Sigmoid colon (tissue), 7 donors: ENCODE measurements at regions of chr9 and their contacts with region 1.

Region 1: GRCh38 chr9:97982683-97983588 is at the start of gene ANP32B:
- DNase-seq: peak; percentile 96
- H3K4me3 ChIP-seq: peak within 1 kb of the TSS; percentile 76 to 97 (median 93)
- H3K27ac ChIP-seq: peak within 1 kb of the TSS; percentile 98 to 100 (median 98)
- H3K4me1 ChIP-seq: peaks cover 0 to 45% (median 34%) of the 10 kb centered on the region in 4 donors
- H3K27me3 ChIP-seq: no peaks in the 10 kb centered on the region
- CTCF ChIP-seq: peak; percentile 33 to 92 (median 44)
- EP300 ChIP-seq: no peak
- POLR2A ChIP-seq: no peak
- total RNA-seq, gene ANP32B: 31.4 to 66.7 (median 51.3) TPM

Region 2: GRCh38 chr9:97632985-97633858 is 349.7 kb before region 1 on chr9 and contains the starts of genes NCBP1 and TSTD2:
- intact Hi-C with region 1: loop called (anchors 2 kb)
- DNase-seq: peak; percentile 99
- H3K4me3 ChIP-seq: peak within 1 kb of the TSS; percentile 73 to 91 (median 79)
- H3K27ac ChIP-seq: peak within 1 kb of the TSS; percentile 85 to 98 (median 94)
- H3K4me1 ChIP-seq: peaks cover 0 to 66% (median 43%) of the 10 kb centered on the region in 4 donors
- H3K27me3 ChIP-seq: no peaks in the 10 kb centered on the region
- CTCF ChIP-seq: no peak
- EP300 ChIP-seq: peak in 1 of 4 donors; percentile 30
- POLR2A ChIP-seq: peak; percentile 79 to 80
- total RNA-seq, gene NCBP1: 13.9 to 20.2 (median 18.7) TPM
- total RNA-seq, gene TSTD2: 15.5 to 31.2 (median 24.9) TPM

Region 3: DNA sequence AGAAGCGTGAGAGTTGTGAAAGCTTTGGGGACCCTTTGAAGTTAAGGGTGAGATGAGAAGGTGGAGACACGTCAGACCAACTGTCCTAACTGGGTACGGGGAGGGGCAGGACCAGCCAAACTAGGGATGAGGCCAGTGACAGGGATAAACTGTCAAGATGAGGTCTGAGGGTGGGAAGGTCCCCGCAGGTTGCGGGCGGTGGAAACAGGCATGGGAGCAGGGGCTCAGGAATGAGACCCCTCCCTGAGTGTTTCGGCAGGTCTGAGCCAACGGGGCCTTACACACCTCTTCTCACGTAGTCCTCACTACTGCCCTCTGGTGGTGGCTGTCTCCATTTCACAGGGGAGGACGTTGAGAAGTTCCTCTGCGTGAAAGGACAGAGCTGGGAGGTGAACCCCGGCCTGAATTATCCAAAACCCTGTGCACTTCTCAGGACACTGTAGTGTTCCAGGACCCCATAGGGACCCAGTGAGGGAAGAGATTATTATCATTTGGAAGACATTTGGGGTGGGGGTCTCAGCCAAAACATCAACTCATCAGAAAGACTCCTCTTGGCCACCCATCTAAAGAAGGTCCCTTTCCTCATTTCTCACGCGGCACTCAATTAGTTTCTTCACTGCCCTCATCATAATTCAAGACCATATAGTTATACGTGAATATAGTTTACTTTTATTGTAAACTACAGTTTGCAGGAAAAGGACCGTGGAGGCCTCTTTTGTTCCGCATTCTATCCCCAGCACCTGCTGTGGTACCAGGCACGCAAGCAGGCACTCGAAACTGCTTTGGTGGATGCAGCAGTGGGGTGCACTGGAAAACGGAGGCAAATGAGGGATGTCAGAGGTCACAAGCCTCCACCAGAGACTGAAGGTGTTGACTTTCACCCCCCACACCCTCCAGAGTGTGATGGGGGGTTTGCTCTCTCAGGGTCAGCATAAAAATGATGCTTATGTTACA is 51.9 kb after region 1 on chr9:
- intact Hi-C with region 1: loop called (anchors 2 kb)
- DNase-seq: peak; percentile 93
- H3K4me3 ChIP-seq: peak overlapping the region in 2 of 4 donors; percentile 14 to 23
- H3K27ac ChIP-seq: no peak overlapping the region
- H3K4me1 ChIP-seq: peaks cover 0 to 6% (median 5%) of the 10 kb centered on the region in 4 donors
- H3K27me3 ChIP-seq: no peaks in the 10 kb centered on the region
- CTCF ChIP-seq: peak; percentile 33 to 94 (median 86)
- EP300 ChIP-seq: no peak
- POLR2A ChIP-seq: no peak

Region 4: DNA sequence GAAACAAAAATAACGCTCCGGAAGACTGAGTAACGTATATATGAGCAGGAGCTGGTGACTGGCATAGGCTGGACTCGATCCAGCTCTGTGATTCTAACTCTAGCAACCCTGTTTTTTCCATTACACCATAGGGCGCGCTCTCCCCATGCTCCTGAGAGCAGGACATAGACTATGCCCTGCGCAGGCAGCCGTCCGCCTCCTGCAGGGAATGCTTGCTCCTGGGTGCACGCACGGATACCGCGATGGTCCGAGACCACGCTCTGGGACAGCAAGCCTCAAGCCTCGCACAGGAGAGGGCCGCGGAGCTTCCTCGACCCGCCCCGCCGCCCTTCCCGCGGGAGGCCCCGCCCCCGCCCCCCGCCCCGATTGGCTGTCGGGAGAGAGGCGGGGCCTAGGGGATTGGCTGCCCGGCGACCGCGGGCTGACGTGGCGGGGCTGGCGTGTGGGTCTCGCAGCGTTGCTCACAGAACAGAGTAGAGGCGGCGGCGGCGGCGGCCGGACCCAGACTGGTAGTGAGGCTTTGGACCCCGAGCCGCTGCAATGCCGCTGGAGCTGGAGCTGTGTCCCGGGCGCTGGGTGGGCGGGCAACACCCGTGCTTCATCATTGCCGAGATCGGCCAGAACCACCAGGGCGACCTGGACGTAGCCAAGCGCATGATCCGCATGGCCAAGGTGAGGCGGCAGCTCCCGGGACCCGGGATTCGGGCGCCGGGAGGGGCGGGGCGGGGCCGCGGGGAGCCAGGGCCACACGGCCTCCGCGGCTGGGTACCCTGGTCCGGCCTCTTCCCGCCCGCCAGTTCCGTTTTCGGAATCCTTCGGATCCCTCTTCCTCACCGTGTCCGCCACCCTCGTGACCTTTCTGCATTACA is 73.6 kb after region 1 on chr9 and contains the start of gene NANS:
- intact Hi-C with region 1: loop called (anchors 2 kb)
- DNase-seq: peak; percentile 97
- H3K4me3 ChIP-seq: peak within 1 kb of the TSS; percentile 78 to 95 (median 82)
- H3K27ac ChIP-seq: peak within 1 kb of the TSS; percentile 95 to 98 (median 96)
- H3K4me1 ChIP-seq: peaks cover 0 to 20% (median 9%) of the 10 kb centered on the region in 4 donors
- H3K27me3 ChIP-seq: no peaks in the 10 kb centered on the region
- CTCF ChIP-seq: no peak
- EP300 ChIP-seq: no peak
- POLR2A ChIP-seq: peak; percentile 73 to 92
- total RNA-seq, gene NANS: 24.6 to 38.1 (median 28.4) TPM

Region 5: GRCh38 chr9:98255578-98256296 is 272.8 kb after region 1 on chr9 and contains the start of gene TBC1D2:
- intact Hi-C with region 1: loop called (anchors 5 kb)
- DNase-seq: peak; percentile 97
- H3K4me3 ChIP-seq: peak within 1 kb of the TSS; percentile 52 to 95 (median 89)
- H3K27ac ChIP-seq: peak within 1 kb of the TSS; percentile 91 to 98 (median 95)
- H3K4me1 ChIP-seq: peaks cover 0 to 23% (median 18%) of the 10 kb centered on the region in 4 donors
- H3K27me3 ChIP-seq: no peaks in the 10 kb centered on the region
- CTCF ChIP-seq: no peak
- EP300 ChIP-seq: no peak
- POLR2A ChIP-seq: peak; percentile 40 to 51
- total RNA-seq, gene TBC1D2: 4.8 to 13.8 (median 5.3) TPM